ENCODE measurements at regions of chr6 and their contacts with region 1.

Region 1: DNA sequence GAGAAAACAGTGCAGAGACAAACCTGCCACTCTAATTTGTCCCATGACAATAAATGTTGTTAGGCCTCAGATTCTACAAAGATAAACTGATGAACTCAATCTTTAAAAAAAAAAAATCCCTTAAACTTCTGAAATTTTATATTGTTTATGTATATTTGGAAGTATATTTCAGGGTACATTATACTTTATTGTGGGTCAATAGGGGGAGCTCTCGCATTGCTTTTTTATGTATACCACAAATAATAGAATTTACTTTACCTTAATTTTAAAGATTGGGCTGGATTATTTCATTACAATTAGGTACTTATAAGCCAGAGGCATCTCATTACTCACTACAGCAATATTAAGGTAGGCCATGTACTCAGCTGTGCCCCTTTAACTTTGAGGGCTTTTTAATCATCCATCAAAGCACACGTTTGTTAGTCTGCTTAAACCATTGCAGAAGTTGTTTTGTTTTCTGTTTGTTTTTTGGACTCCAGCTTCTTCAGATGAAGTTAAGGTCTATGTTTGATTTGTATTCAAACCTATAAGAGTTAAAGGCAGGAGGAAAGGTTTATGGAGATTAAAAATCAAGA is 56.3 kb upstream of the EYA4 start:
- DNase-seq: peak; percentile 53
- ATAC-seq: peak; percentile 49; the same call in 1 of the 2 replicates
- H3K4me3 ChIP-seq: no peak overlapping the region
- H3K27ac ChIP-seq: no peak overlapping the region
- H3K4me1 ChIP-seq: 0 out of 2 replicates have a peak, but pooled peaks cover 2% of the 10 kb centered on the region
- H3K27me3 ChIP-seq: no peaks in the 10 kb centered on the region
- CTCF ChIP-seq: peak; percentile 70
- POLR2A ChIP-seq: no peak
- RAD21 ChIP-seq: peak; percentile 69

Region 2: GRCh38 chr6:132962936-132963868 is 221.7 kb before region 1 on chr6:
- CTCF ChIA-PET with region 1: interaction called, 5 read pairs
- POLR2A ChIA-PET with region 1: no interaction called
- dilution Hi-C with region 1: no loop called
- in situ Hi-C with region 1: no loop called
- intact Hi-C with region 1: loop called (anchors 5 kb)
- DNase-seq: peak; percentile 77
- ATAC-seq: peak; percentile 60
- H3K4me3 ChIP-seq: no peak overlapping the region
- H3K27ac ChIP-seq: no peak overlapping the region
- H3K4me1 ChIP-seq: peaks cover 9% of the 10 kb centered on the region
- H3K27me3 ChIP-seq: no peaks in the 10 kb centered on the region
- CTCF ChIP-seq: peak; percentile 71
- POLR2A ChIP-seq: no peak
- RAD21 ChIP-seq: peak; percentile 82

Region 3: DNA sequence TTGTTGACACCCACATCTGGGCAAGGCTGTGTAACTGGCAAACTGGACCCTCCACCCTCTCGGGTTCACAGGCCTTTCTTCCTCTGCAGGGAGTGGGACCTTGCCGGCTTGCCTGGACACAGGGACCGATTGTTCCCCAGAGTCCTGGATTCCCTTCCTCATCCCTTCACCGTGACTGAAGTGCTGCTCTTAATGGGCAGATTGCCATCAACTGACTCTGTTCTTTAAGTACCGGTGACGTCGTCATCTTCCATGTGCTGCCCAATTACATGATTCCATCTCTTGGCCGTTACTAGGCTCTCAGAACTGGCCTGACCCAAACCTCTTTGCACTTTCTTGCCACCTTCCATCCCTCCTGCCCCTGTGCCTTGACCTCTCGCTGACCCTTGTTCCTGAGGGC is 141.7 kb after region 1 on chr6:
- CTCF ChIA-PET with region 1: no interaction called
- POLR2A ChIA-PET with region 1: no interaction called
- dilution Hi-C with region 1: no loop called
- in situ Hi-C with region 1: no loop called
- intact Hi-C with region 1: no loop called
- DNase-seq: no peak
- ATAC-seq: no peak
- H3K4me3 ChIP-seq: no peak overlapping the region
- H3K27ac ChIP-seq: no peak overlapping the region
- H3K4me1 ChIP-seq: no peaks in the 10 kb centered on the region
- H3K27me3 ChIP-seq: no peaks in the 10 kb centered on the region
- CTCF ChIP-seq: no peak
- POLR2A ChIP-seq: no peak
- RAD21 ChIP-seq: no peak

Region 4: GRCh38 chr6:133512410-133513016 is 327.6 kb after region 1 on chr6:
- CTCF ChIA-PET with region 1: no interaction called
- POLR2A ChIA-PET with region 1: no interaction called
- dilution Hi-C with region 1: no loop called
- in situ Hi-C with region 1: no loop called
- intact Hi-C with region 1: loop called (anchors 2 kb)
- DNase-seq: peak; percentile 67
- ATAC-seq: peak; percentile 72
- H3K4me3 ChIP-seq: no peak overlapping the region
- H3K27ac ChIP-seq: no peak overlapping the region
- H3K4me1 ChIP-seq: no peaks in the 10 kb centered on the region
- H3K27me3 ChIP-seq: no peaks in the 10 kb centered on the region
- CTCF ChIP-seq: peak; percentile 81
- POLR2A ChIP-seq: peak; percentile 46; the same call in 1 of the 2 replicates
- RAD21 ChIP-seq: peak; percentile 92

Region 5: DNA sequence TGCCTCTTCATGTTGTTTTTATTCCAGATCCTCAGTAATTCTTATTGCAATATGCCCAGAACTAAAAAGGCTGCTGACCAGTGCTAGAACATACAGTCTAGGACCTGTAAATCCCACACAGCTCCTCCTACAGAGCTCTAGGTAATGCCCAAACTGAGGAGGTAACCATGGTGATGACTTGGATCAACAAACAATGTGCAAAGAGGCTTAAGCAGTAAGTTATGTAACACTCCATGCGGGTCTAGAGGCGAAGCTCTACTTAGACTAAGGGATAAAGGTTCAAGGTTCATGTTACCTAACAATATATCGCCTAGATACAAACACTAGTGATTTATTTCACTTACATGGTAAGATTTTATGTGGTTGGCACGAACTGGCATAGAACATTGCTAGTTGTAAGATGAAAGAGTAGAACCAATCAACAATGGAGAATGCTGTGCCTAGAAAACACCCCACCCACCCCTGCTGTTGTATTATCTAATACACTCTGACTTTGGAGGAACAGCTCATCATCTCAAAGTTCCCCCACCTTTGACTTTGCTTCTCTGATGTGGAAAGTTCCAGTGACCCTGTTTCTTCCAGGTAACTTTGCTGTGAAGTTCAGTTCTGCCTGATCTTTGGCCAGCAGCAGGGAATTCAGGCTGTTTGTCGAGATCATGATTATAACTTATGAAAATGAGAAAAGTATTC is 1522.6 kb after region 1 on chr6:
- CTCF ChIA-PET with region 1: no interaction called
- POLR2A ChIA-PET with region 1: no interaction called
- dilution Hi-C with region 1: no loop called
- in situ Hi-C with region 1: no loop called
- intact Hi-C with region 1: no loop called
- DNase-seq: peak; percentile 66
- ATAC-seq: peak; percentile 51
- H3K4me3 ChIP-seq: no peak overlapping the region
- H3K27ac ChIP-seq: peak overlapping the region; percentile 58; the same call in 1 of the 2 replicates
- H3K4me1 ChIP-seq: peaks cover 12% of the 10 kb centered on the region
- H3K27me3 ChIP-seq: no peaks in the 10 kb centered on the region
- CTCF ChIP-seq: no peak
- POLR2A ChIP-seq: no peak
- RAD21 ChIP-seq: no peak

Measured in IMR-90 (cell line).